WTC11 (cell line): ENCODE measurements at regions of chr10 and their contacts with region 1.

Region 1: GRCh38 chr10:11853468-11853867 is 30.3 kb downstream of the PROSER2 start:
- DNase-seq: peak; percentile 32
- ATAC-seq: peak; percentile 74
- H3K4me3 Mint-ChIP-seq: no peak overlapping the region
- H3K27ac Mint-ChIP-seq: no peak overlapping the region; the same call in 1 of the 2 replicates
- H3K4me1 Mint-ChIP-seq: no peaks in the 10 kb centered on the region
- H3K27me3 Mint-ChIP-seq: no peaks in the 10 kb centered on the region
- CTCF ChIP-seq: peak; percentile 54

Region 2: GRCh38 chr10:11863353-11864109 is 10.1 kb after region 1 on chr10:
- CTCF ChIA-PET with region 1: interaction called, 10 read pairs
- POLR2A ChIA-PET with region 1: no interaction called
- DNase-seq: no peak
- ATAC-seq: no peak
- H3K4me3 Mint-ChIP-seq: no peak overlapping the region
- H3K27ac Mint-ChIP-seq: no peak overlapping the region
- H3K4me1 Mint-ChIP-seq: peaks cover 13% of the 10 kb centered on the region
- H3K27me3 Mint-ChIP-seq: no peaks in the 10 kb centered on the region
- CTCF ChIP-seq: no peak

Region 3: DNA sequence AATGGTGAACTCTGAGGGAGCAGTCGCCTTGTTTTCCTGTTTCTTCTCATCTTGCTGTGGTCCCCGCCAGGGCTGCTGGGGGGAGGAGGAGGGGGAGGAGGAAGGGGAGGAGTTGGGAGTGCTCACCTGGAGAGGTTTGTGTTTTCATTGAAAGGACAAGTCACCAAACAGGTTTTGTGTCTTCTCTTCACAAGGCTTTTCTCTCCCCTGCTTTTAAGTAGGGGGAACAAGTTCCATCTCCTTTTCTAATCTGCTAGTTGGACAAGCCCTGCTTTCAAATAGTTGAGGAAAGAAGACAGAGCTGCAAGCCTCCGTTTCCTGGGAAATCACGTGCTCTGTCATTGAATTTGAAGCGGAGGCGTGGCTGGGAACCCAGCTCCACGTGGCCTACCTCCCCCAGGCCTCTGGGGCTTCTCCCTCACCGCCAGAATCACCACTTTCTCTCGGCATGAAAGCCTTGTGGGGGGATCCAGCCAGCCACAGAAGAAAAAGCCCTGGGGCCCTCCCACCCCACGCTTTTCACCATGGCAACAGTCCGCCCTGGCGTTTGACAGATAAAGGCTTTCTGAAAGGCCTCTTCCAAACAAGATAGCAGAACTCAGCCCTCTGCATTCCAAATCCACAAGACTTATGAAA is 21.2 kb after region 1 on chr10:
- CTCF ChIA-PET with region 1: interaction called, 11 read pairs
- POLR2A ChIA-PET with region 1: no interaction called
- DNase-seq: peak; percentile 63
- ATAC-seq: peak; percentile 38
- H3K4me3 Mint-ChIP-seq: peak overlapping the region; percentile 54
- H3K27ac Mint-ChIP-seq: peak overlapping the region; percentile 86
- H3K4me1 Mint-ChIP-seq: peaks cover 44% of the 10 kb centered on the region
- H3K27me3 Mint-ChIP-seq: peaks cover 3% of the 10 kb centered on the region
- CTCF ChIP-seq: no peak

Region 4: GRCh38 chr10:12036073-12036655 is 182.7 kb after region 1 on chr10:
- CTCF ChIA-PET with region 1: no interaction called
- POLR2A ChIA-PET with region 1: no interaction called
- DNase-seq: no peak
- ATAC-seq: no peak
- H3K4me3 Mint-ChIP-seq: no peak overlapping the region
- H3K27ac Mint-ChIP-seq: no peak overlapping the region
- H3K4me1 Mint-ChIP-seq: peaks cover 11% of the 10 kb centered on the region
- H3K27me3 Mint-ChIP-seq: no peaks in the 10 kb centered on the region
- CTCF ChIP-seq: no peak